Naive thymus-derived CD4-positive, alpha-beta T cell (primary cell): ENCODE measurements at regions of chr6 and their contacts with region 1.

Region 1: DNA sequence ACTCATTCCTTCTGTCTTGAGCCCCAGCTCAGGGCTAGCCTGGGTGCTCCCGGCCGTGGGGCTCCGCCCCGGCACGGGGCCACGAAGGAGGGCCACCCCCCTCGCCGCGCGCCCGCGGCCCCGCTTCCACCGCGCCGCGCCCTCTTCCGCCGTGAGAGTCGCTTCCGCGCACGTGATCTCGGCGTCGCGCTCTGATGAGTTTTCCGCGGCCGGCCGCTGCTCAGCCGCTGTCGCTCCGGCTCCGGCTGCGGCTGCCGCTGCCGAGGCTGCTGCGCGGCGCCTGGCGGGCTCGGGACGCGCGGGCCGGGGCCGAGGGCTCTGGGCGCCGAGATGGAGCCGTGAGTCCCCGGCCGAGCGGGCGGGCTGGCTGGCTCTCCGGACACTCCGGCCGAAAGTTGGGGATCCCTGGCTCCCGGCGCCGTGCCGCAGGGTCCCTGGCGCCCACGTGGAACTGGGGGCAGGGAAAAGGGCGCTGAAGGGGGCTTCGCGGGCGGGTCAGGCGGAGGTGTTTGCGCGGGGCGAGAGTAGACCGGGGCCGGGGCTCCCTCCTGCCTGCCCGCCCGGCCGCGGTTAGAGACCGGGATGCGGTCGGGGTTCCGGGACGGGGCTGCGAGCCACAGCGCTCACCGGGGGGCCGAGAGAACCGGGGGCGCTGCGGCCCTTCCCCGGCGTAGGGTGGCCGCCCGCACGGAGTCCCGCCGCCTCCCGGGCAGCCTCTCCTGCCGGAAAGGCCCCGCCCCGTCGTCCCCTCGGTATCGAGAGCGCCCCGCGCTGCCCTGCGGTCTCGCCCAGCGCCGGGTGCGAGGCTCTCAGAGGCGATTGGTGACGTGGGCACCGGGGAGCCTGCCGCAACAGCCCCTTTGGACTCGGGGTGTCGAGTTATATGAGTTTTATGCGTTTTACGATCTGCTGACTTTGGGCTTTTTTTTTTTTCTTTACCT is at the start of gene TMEM181:
- DNase-seq: peak; percentile 73 to 87 (median 86)
- ATAC-seq: peak; percentile 96
- H3K4me3 ChIP-seq: peak within 1 kb of the TSS; percentile 76
- H3K4me3 Mint-ChIP-seq: peak within 1 kb of the TSS; percentile 90 to 98 (median 94)
- H3K27ac ChIP-seq: peak within 1 kb of the TSS; percentile 94
- H3K27ac Mint-ChIP-seq: peak within 1 kb of the TSS; percentile 93 to 97 (median 94)
- H3K4me1 ChIP-seq: peaks cover 30 to 38% of the 10 kb centered on the region in 2 donors
- H3K4me1 Mint-ChIP-seq: peaks cover 26 to 46% (median 44%) of the 10 kb centered on the region in 7 donors
- H3K27me3 ChIP-seq: no peaks in the 10 kb centered on the region
- H3K27me3 Mint-ChIP-seq: peaks cover 0 to 17% (median 0%) of the 10 kb centered on the region in 5 donors
- total RNA-seq, gene TMEM181: 14.9 to 17.2 (median 16.5) TPM

Region 2: GRCh38 chr6:157405986-157406385 is 1154.2 kb before region 1 on chr6:
- CTCF ChIA-PET with region 1: no interaction called
- POLR2A ChIA-PET with region 1: no interaction called
- intact Hi-C with region 1: no loop called
- DNase-seq: no peak
- ATAC-seq: no peak
- H3K4me3 ChIP-seq: no peak overlapping the region
- H3K4me3 Mint-ChIP-seq: no peak overlapping the region
- H3K27ac ChIP-seq: no peak overlapping the region
- H3K27ac Mint-ChIP-seq: peak overlapping the region in 1 of 9 donors; percentile 33
- H3K4me1 ChIP-seq: no peaks in the 10 kb centered on the region
- H3K4me1 Mint-ChIP-seq: peaks cover 0 to under 1% (median 0%) of the 10 kb centered on the region in 7 donors
- H3K27me3 ChIP-seq: no peaks in the 10 kb centered on the region
- H3K27me3 Mint-ChIP-seq: peaks cover 0 to 6% (median 1%) of the 10 kb centered on the region in 5 donors

Region 3: GRCh38 chr6:157860505-157860991 is 699.6 kb before region 1 on chr6:
- CTCF ChIA-PET with region 1: no interaction called
- POLR2A ChIA-PET with region 1: no interaction called
- intact Hi-C with region 1: no loop called
- DNase-seq: peak in 7 of 9 donors; percentile 55 to 85 (median 72)
- ATAC-seq: peak; percentile 92
- H3K4me3 ChIP-seq: no peak overlapping the region
- H3K4me3 Mint-ChIP-seq: peak overlapping the region in 9 of 10 donors; percentile 24 to 83 (median 62)
- H3K27ac ChIP-seq: no peak overlapping the region
- H3K27ac Mint-ChIP-seq: peak overlapping the region in 8 of 9 donors; percentile 9 to 74 (median 66)
- H3K4me1 ChIP-seq: peaks cover 5 to 28% of the 10 kb centered on the region in 2 donors
- H3K4me1 Mint-ChIP-seq: peaks cover 21 to 95% (median 77%) of the 10 kb centered on the region in 7 donors
- H3K27me3 ChIP-seq: peaks cover 0 to 4% of the 10 kb centered on the region in 2 donors
- H3K27me3 Mint-ChIP-seq: peaks cover 0 to 45% (median 0%) of the 10 kb centered on the region in 5 donors

Region 4: GRCh38 chr6:158213925-158214674 is 346.1 kb before region 1 on chr6:
- CTCF ChIA-PET with region 1: no interaction called
- POLR2A ChIA-PET with region 1: no interaction called
- intact Hi-C with region 1: loop called in 1 of 2 experiments (anchors 5 kb)
- DNase-seq: peak; percentile 18 to 62 (median 49)
- ATAC-seq: peak; percentile 96
- H3K4me3 ChIP-seq: no peak overlapping the region
- H3K4me3 Mint-ChIP-seq: no peak overlapping the region
- H3K27ac ChIP-seq: no peak overlapping the region
- H3K27ac Mint-ChIP-seq: no peak overlapping the region
- H3K4me1 ChIP-seq: no peaks in the 10 kb centered on the region
- H3K4me1 Mint-ChIP-seq: peaks cover under 1 to 16% (median 2%) of the 10 kb centered on the region in 7 donors
- H3K27me3 ChIP-seq: no peaks in the 10 kb centered on the region
- H3K27me3 Mint-ChIP-seq: peaks cover 0 to 2% (median 0%) of the 10 kb centered on the region in 5 donors

Region 5: GRCh38 chr6:158290659-158291058 is 269.5 kb before region 1 on chr6:
- CTCF ChIA-PET with region 1: no interaction called
- POLR2A ChIA-PET with region 1: no interaction called
- intact Hi-C with region 1: loop called in 1 of 2 experiments (anchors 2 kb)
- DNase-seq: peak in 8 of 9 donors; percentile 20 to 63 (median 52)
- ATAC-seq: peak; percentile 96
- H3K4me3 ChIP-seq: peak overlapping the region; percentile 33
- H3K4me3 Mint-ChIP-seq: peak overlapping the region; percentile 61 to 93 (median 83)
- H3K27ac ChIP-seq: peak overlapping the region; percentile 23
- H3K27ac Mint-ChIP-seq: peak overlapping the region; percentile 28 to 95 (median 86)
- H3K4me1 ChIP-seq: peaks cover 10 to 33% of the 10 kb centered on the region in 2 donors
- H3K4me1 Mint-ChIP-seq: peaks cover 25 to 64% (median 47%) of the 10 kb centered on the region in 7 donors
- H3K27me3 ChIP-seq: no peaks in the 10 kb centered on the region
- H3K27me3 Mint-ChIP-seq: no peaks in the 10 kb centered on the region

Region 6: GRCh38 chr6:158536084-158536890 is 23.9 kb before region 1 on chr6:
- CTCF ChIA-PET with region 1: no interaction called
- POLR2A ChIA-PET with region 1: interaction called, 7 read pairs
- intact Hi-C with region 1: loop called (anchors 1 to 2 kb)
- DNase-seq: peak; percentile 47 to 80 (median 64)
- ATAC-seq: peak; percentile 75
- H3K4me3 ChIP-seq: peak overlapping the region; percentile 48
- H3K4me3 Mint-ChIP-seq: peak overlapping the region; percentile 49 to 84 (median 76)
- H3K27ac ChIP-seq: no peak overlapping the region
- H3K27ac Mint-ChIP-seq: no peak overlapping the region
- H3K4me1 ChIP-seq: no peaks in the 10 kb centered on the region
- H3K4me1 Mint-ChIP-seq: peaks cover 0 to 13% (median 0%) of the 10 kb centered on the region in 7 donors
- H3K27me3 ChIP-seq: peaks cover 0 to 8% of the 10 kb centered on the region in 2 donors
- H3K27me3 Mint-ChIP-seq: peaks cover 40 to 66% (median 53%) of the 10 kb centered on the region in 5 donors

Region 7: GRCh38 chr6:158686791-158687381 is 126.7 kb after region 1 on chr6:
- CTCF ChIA-PET with region 1: no interaction called
- POLR2A ChIA-PET with region 1: no interaction called
- intact Hi-C with region 1: loop called (anchors 1 to 5 kb)
- DNase-seq: peak; percentile 29 to 92 (median 87)
- ATAC-seq: peak; percentile 96
- H3K4me3 ChIP-seq: peak overlapping the region; percentile 31
- H3K4me3 Mint-ChIP-seq: peak overlapping the region; percentile 66 to 91 (median 79)
- H3K27ac ChIP-seq: peak overlapping the region; percentile 82
- H3K27ac Mint-ChIP-seq: peak overlapping the region; percentile 88 to 100 (median 98)
- H3K4me1 ChIP-seq: peaks cover 28 to 49% of the 10 kb centered on the region in 2 donors
- H3K4me1 Mint-ChIP-seq: peaks cover 36 to 76% (median 70%) of the 10 kb centered on the region in 7 donors
- H3K27me3 ChIP-seq: no peaks in the 10 kb centered on the region
- H3K27me3 Mint-ChIP-seq: no peaks in the 10 kb centered on the region